ENCODE measurements at regions of chr3 and their contacts with region 1.

Region 1: DNA sequence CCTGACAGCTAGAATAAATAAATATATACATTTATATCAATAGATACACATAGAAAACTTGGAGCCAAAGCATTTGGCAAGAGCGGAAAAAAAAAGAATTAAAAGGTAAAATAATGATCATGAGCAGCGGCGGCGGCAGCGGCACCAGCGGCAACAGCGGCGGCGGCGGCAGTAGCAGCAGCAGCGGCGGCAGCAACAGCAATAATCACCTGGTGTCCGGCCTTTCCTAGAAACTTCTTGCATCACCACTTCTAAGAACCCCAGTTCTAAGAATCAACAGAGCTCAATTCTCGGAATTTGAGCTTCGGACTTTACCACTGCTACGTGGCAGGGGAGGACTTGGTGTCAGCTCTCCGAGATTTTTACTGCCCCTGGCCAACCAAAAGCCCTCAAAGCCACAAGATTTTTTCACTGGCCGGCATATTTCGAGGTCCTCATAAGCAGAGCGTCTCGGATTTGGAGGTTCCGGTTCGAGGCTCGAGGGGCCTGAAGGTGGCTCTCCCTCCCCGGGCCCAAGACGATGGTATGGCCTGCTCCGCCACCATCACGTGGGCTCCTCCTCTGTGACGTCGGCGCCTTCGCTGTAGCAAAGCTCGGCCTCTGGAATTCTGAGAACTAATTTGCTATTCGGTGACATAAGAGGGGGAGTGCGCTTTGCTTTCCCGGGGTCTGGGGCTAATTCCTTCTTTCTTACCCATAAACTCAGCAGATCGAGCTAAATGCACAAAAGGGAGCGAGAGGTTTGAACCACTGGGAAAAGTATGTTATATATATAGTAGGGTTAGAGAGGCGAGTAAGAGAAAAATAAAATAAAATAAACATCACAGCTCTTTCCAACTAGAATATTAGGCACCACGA is at the start of gene BCL6:
- DNase-seq: peak; percentile 98
- H3K4me3 ChIP-seq: peak within 1 kb of the TSS; percentile 86
- H3K27ac ChIP-seq: peak within 1 kb of the TSS; percentile 90
- H3K4me1 ChIP-seq: peaks cover 39% of the 10 kb centered on the region
- CTCF ChIP-seq: no peak
- total RNA-seq, gene BCL6: 62.4 and 65.6 TPM in 2 replicates

Region 2: GRCh38 chr3:187616307-187616972 is 129.0 kb before region 1 on chr3:
- CTCF ChIA-PET with region 1: no interaction called
- POLR2A ChIA-PET with region 1: no interaction called
- intact Hi-C with region 1: no loop called
- DNase-seq: peak; percentile 59
- H3K4me3 ChIP-seq: no peak overlapping the region
- H3K27ac ChIP-seq: no peak overlapping the region
- H3K4me1 ChIP-seq: no peaks in the 10 kb centered on the region
- CTCF ChIP-seq: peak; percentile 92

Region 3: DNA sequence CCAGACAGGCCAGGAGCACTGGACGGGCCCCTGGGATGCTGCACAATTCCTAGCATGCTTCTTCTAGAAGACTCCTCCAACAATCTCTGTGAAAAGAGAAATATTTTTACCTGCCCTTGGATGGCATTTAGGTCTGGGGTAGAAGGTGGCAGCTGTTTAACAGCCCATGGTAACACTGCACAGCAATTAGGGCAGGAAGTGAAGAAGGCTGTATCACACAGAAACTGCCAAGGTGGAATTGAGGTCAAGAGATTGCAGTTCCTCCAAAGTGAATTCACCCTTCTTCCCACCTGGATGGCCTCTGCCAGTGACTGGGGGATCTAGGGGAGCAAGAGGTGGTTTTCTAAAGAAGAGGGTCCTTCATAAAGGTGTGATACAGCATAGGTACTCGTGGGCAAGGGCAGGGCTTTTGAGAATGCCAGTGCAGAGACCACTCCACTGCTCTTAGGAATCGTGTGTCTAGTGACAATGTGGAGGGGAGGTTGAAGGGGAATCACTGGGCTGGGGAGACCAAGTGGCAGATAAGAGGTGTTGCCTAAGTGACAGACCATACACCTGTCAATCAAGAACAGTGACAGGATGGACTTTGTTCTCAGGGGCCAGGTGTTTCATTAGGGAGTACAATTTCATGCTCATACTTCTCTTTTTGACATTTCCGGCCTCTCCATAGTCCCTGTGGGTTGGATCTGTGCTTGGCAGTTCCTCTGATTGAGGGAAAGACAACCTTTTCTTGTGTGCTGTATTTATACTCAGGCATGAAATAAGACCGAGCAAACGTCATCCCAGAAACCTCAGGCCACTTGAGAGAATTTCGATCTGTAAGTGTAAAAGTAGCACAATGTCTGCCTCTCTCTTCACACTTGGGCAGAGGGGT is 83.4 kb after region 1 on chr3:
- CTCF ChIA-PET with region 1: no interaction called
- POLR2A ChIA-PET with region 1: no interaction called
- intact Hi-C with region 1: loop called (anchors 2 kb)
- DNase-seq: peak; percentile 89
- H3K4me3 ChIP-seq: peak overlapping the region; percentile 30
- H3K27ac ChIP-seq: peak overlapping the region; percentile 72
- H3K4me1 ChIP-seq: peaks cover 31% of the 10 kb centered on the region
- CTCF ChIP-seq: no peak

Region 4: GRCh38 chr3:187919048-187919447 is 173.6 kb after region 1 on chr3:
- CTCF ChIA-PET with region 1: interaction called, 9 read pairs
- POLR2A ChIA-PET with region 1: interaction called, 59 read pairs
- intact Hi-C with region 1: loop called (anchors 1 kb)
- DNase-seq: peak; percentile 93
- H3K4me3 ChIP-seq: peak overlapping the region; percentile 55
- H3K27ac ChIP-seq: peak overlapping the region; percentile 97
- H3K4me1 ChIP-seq: peaks cover 99% of the 10 kb centered on the region
- CTCF ChIP-seq: no peak

Region 5: GRCh38 chr3:187935623-187936156 is 190.3 kb after region 1 on chr3:
- CTCF ChIA-PET with region 1: interaction called, 5 read pairs
- POLR2A ChIA-PET with region 1: interaction called, 420 read pairs
- intact Hi-C with region 1: no loop called
- DNase-seq: peak; percentile 91
- H3K4me3 ChIP-seq: peak overlapping the region; percentile 25
- H3K27ac ChIP-seq: peak overlapping the region; percentile 99
- H3K4me1 ChIP-seq: peaks cover 100% of the 10 kb centered on the region
- CTCF ChIP-seq: no peak

Region 6: DNA sequence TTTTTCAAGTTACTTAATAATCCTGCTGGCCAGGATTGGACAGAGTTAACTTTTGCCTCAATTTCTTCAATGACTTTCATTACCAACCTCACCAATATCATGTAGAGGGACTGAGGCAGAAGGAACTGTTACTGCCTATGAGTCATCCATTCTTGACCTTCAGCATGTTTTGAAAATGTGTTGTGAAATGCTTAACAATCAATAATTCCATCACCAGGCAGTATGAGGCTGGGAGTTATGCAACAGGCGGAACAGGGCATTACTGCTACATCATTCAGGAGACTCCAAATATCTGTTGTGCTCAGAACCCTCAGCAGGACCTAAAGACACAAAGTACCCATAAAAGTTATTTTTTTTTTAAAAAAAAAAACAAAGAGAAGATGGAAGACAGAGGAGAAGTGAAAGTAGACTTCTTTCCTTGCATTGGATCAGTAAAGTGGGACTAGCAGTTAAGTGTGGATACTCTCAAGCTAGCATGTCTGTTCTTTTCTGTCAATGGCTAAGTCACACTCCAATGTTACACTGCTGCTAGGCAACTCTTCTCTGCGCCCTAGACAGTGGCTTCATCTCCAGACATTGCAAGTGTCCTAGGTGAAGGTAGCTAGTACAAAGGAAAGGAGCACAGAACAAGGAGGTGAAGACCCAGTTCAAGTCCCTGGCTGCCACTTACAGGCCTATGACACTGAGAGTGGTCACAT is 223.6 kb after region 1 on chr3:
- CTCF ChIA-PET with region 1: interaction called, 5 read pairs
- POLR2A ChIA-PET with region 1: interaction called, 531 read pairs
- intact Hi-C with region 1: loop called (anchors 1 kb)
- DNase-seq: no peak
- H3K4me3 ChIP-seq: peak overlapping the region; percentile 41
- H3K27ac ChIP-seq: peak overlapping the region; percentile 99
- H3K4me1 ChIP-seq: peaks cover 99% of the 10 kb centered on the region
- CTCF ChIP-seq: no peak; the same call in 1 of the 2 replicates

Region 7: DNA sequence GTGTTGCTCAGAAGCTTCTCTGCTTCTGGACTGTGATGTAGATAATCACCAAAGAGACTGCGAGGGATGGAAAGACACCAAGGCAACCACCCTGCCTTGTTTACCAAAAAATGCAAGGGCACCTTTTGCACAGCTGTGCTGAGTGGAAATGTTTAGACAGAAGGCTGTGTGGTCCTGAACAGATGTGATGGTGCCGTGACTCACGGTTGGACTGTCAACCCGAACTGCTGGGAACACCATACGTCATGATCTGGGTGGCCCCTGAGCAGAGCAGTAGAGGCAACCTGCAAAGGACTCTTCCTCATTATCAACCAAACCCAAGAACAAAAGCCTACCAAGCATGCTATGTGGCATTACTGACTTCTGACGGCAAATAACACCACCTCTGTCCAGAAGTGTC is 347.2 kb after region 1 on chr3:
- CTCF ChIA-PET with region 1: interaction called, 3 read pairs
- POLR2A ChIA-PET with region 1: interaction called, 66 read pairs
- intact Hi-C with region 1: no loop called
- DNase-seq: peak; percentile 90
- H3K4me3 ChIP-seq: peak overlapping the region; percentile 6
- H3K27ac ChIP-seq: peak overlapping the region; percentile 76
- H3K4me1 ChIP-seq: peaks cover 91% of the 10 kb centered on the region
- CTCF ChIP-seq: no peak